Mammary epithelial cell (primary cell): ENCODE measurements at regions of chr3 and their contacts with region 1.

Region 1: GRCh38 chr3:146065573-146066006 is 95.4 kb downstream of the PLOD2 start:
- DNase-seq: peak; percentile 24
- H3K4me3 ChIP-seq: no peak overlapping the region
- H3K27ac ChIP-seq: no peak overlapping the region
- H3K4me1 ChIP-seq: no peaks in the 10 kb centered on the region
- H3K27me3 ChIP-seq: no peaks in the 10 kb centered on the region
- CTCF ChIP-seq: peak; percentile 54 to 61

Region 2: DNA sequence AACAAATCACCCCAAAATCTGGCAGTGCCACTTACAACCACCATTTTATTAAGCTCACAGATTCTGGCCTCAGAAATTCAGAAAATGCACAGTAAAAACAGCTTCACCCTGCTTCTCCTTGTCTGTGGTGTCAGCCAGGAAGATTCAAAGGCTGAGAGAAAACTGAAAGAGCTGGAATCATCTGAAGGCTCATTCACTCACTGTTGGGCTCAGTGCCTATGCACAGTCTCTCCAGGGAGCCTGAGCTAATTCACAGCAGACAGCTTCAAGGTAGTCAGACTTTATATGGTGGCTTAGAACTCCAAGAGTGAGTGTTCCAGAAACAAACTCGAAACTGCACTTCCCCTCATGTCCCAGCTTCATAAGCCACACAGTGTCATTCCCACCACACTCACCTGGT is 111.9 kb after region 1 on chr3:
- CTCF ChIA-PET with region 1: no interaction called
- dilution Hi-C with region 1: no loop called
- in situ Hi-C with region 1: loop called (anchors 10 to 25 kb)
- intact Hi-C with region 1: no loop called
- DNase-seq: no peak
- H3K4me3 ChIP-seq: no peak overlapping the region
- H3K27ac ChIP-seq: no peak overlapping the region
- H3K4me1 ChIP-seq: peaks cover 4% of the 10 kb centered on the region
- H3K27me3 ChIP-seq: no peaks in the 10 kb centered on the region
- CTCF ChIP-seq: no peak

Region 3: DNA sequence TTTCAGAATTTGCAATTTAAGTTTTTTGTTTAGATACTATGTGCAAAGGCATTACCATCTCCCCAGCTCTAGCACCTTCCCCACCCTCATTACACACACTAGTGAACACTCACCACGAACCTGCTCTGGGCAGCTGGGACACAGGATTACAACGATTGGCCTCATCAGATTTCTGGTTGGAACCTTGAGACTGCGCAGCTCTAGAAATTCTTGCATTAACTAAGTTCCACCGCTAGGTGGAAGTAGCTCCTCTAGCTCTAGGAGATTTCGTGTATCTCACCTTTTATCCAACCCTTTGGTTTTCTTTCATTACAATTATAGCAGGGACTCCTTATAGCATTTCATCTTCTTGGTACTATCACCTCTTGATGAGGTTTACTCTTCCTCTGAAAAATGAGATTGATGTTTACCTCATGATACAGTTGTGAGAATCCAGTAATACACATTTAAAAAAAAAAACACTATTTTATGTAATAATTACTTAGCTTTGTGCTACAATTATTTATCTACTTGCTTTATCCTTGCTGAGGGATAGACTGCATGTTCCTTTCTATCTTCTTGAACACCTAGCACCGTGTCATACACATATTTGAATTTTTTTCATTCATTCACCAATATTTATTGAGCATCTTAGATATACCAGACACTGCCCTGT is 124.1 kb after region 1 on chr3:
- CTCF ChIA-PET with region 1: interaction called, 10 read pairs
- dilution Hi-C with region 1: no loop called
- in situ Hi-C with region 1: no loop called
- intact Hi-C with region 1: loop called (anchors 1 kb)
- DNase-seq: peak; percentile 54
- H3K4me3 ChIP-seq: no peak overlapping the region
- H3K27ac ChIP-seq: no peak overlapping the region
- H3K4me1 ChIP-seq: peaks cover 3% of the 10 kb centered on the region
- H3K27me3 ChIP-seq: no peaks in the 10 kb centered on the region
- CTCF ChIP-seq: peak; percentile 78 to 80

Region 4: DNA sequence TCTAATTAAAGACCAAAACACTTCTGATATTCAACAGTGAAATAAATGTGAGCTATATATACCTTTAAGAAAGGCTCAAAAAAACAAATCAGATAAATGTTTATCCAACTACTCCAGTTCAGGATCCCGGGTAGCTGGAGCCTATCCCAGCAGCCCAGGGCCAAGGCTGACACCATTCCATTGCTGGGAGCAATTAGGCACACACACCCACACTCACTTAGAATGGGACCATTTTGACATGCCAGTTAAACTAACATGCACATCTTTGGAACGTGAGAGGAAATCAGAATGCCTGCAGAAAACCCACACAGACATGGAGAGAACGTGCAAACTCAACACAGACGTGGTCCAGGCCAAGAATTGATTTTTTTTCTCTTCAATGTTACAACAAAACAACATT is 215.3 kb after region 1 on chr3:
- CTCF ChIA-PET with region 1: no interaction called
- dilution Hi-C with region 1: no loop called
- in situ Hi-C with region 1: no loop called
- intact Hi-C with region 1: no loop called
- DNase-seq: no peak
- H3K4me3 ChIP-seq: no peak overlapping the region
- H3K27ac ChIP-seq: no peak overlapping the region
- H3K4me1 ChIP-seq: peaks cover 4% of the 10 kb centered on the region
- H3K27me3 ChIP-seq: no peaks in the 10 kb centered on the region
- CTCF ChIP-seq: no peak